ENCODE measurements at regions of chr4 and their contacts with region 1.

Region 1: DNA sequence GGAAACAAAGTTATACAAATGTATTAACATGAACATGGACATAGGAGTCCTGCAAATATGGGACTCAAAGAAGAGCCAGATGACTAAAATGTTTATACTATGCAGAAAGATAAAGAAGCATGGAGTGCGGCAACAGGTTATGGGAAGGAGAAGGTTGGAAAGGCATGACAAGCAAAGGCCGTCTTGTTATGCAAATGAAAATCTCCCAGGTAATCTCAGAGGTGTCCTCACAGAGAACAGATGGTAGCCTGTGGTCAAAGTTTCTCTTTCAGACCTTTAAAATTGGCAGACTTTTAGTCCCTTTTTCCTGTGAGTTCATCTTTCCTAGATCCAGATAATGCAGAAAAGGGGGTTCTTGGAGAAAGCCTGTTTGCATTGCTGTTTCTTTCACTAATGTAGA is 116.4 kb upstream of the BEND4 start:
- DNase-seq: no peak
- CTCF ChIP-seq: no peak

Region 2: GRCh38 chr4:42104521-42104920 is 164.3 kb before region 1 on chr4:
- CTCF ChIA-PET with region 1: no interaction called
- POLR2A ChIA-PET with region 1: no interaction called
- DNase-seq: no peak
- CTCF ChIP-seq: no peak

Region 3: DNA sequence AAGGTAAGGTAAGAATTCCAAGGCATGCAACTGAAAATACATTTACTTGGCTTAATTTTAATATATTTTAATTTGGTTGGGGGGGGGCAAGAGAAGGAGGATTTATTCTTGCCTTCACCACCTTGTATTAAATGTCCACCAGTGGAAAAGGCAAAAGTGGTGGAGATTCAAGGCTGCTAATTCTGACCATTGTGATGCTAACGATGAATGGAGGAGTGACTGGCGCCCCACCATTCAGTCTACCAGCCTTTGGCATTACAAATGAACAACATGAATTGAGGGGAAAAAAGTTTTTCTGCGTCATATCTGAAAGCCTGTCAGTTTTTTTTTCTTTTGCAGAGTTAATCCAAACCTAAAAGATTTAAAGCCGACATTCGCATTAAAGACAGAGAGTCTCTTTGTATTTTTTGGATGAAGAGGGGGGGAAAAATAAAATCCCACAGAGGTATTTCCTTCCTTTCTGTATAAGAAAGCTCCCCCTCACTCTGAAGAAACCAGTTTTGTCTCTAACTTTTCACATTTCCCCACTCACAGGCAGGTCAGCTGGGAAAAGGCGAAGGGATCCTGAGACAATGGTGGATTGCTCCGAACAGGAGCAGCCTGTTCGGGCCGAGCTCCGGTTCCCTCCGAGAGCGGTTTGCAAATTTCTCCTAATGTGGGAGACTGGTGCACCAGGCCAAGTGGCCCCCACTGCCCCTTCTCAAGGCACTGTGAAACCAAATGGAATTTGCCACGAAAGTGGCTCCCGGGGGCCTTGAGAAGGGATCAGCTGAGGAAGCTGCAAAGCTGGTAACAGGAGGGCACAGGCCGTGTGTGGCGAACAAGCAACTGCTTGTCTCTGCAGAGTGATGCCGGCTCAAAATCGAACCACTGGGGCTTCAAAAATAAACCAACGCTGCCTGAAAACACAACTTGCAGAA is 156.6 kb after region 1 on chr4:
- CTCF ChIA-PET with region 1: no interaction called
- POLR2A ChIA-PET with region 1: interaction called, 10 read pairs
- DNase-seq: no peak
- CTCF ChIP-seq: no peak

Measured in GM10248 (cell line).